Activated CD8-positive, alpha-beta T cell treated with anti-CD3 and anti-CD28 coated beads for 36 hours (primary cell): ENCODE measurements at regions of chr1 and their contacts with region 1.

Region 1: GRCh38 chr1:13737398-13737797 is 37.4 kb downstream of the PRDM2 start:
- DNase-seq: peak; percentile 25
- ATAC-seq: peak; percentile 79
- H3K4me3 Mint-ChIP-seq: no peak overlapping the region
- H3K27ac Mint-ChIP-seq: peak overlapping the region; percentile 88
- H3K4me1 Mint-ChIP-seq: peaks cover 60% of the 10 kb centered on the region
- H3K27me3 Mint-ChIP-seq: no peaks in the 10 kb centered on the region
- CTCF ChIP-seq: no peak

Region 2: GRCh38 chr1:13662493-13662892 is 74.9 kb before region 1 on chr1:
- CTCF ChIA-PET with region 1: no interaction called
- POLR2A ChIA-PET with region 1: no interaction called
- intact Hi-C with region 1: loop called (anchors 2 kb)
- DNase-seq: no peak
- ATAC-seq: no peak
- H3K4me3 Mint-ChIP-seq: no peak overlapping the region
- H3K27ac Mint-ChIP-seq: no peak overlapping the region
- H3K4me1 Mint-ChIP-seq: peaks cover 6% of the 10 kb centered on the region
- H3K27me3 Mint-ChIP-seq: peaks cover 2% of the 10 kb centered on the region
- CTCF ChIP-seq: no peak

Region 3: DNA sequence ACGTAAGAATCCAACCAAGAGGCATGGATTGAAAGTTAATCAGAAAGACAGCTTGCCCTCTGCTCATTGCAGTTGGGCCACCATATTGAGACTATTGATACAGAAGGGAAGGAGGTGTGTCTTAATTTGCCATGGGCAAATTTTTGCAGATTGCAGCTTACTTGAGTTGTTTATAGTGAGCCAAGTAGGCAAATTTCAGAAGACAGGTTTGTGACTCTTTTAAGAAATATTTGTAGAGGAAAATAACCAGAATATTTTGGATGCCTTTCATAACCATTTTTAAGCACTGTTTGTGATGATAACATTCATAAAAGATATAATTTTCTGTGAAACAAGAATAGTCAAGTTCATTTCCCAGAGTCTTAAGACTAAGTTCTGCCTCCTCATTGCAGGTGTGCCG is 36.7 kb after region 1 on chr1:
- CTCF ChIA-PET with region 1: no interaction called
- POLR2A ChIA-PET with region 1: no interaction called
- intact Hi-C with region 1: no loop called
- DNase-seq: no peak
- ATAC-seq: no peak
- H3K4me3 Mint-ChIP-seq: no peak overlapping the region
- H3K27ac Mint-ChIP-seq: no peak overlapping the region
- H3K4me1 Mint-ChIP-seq: peaks cover 26% of the 10 kb centered on the region
- H3K27me3 Mint-ChIP-seq: no peaks in the 10 kb centered on the region
- CTCF ChIP-seq: no peak